ENCODE measurements at regions of chr19 and their contacts with region 1.

Region 1: DNA sequence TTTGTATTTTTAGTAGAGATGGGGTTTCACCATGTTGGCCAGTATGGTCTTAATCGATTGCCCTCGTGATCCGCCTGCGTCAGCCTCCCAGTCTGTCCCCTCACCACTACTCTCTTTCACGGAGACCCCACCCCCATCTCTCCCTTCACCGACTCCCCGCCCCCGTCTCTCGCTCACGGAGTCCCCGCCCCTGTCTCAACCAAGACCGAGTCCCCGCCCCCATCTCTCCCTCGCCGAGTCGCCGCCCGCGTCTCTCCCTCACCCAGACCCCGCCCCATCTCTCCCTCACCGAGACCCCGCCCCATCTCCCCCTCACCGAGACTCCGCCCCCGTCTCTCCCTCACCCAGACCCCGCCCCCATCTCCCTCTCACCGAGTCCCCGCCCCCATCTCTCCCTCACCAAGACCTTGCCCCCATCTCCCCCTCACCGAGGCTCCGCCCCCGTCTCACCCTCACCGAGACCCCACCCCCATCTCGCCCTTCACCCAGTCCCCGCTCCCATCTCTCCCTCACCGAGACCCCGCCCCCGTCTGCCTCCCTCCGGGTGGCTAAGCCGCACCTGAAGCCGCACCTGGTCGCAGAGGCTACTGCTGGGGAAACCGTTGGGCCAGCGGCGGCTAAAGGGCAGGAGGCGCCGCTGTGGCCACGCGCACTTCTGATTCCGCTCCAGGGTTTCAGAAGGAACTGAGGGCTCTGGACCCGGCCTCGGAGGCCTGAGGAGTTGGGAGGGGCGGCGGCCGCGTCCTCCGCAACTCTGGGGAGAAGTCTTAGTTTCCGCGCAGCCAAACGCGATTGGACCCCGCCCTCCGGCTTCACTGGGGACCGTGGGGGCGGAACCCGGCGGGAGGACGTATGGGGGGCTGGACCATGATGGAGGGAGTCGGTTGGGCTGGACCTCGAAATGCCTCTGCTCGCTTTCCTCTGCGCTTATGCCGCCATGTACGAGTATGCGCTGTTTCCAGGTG is 17.1 kb upstream of the ZNF846 start:
- DNase-seq: peak; percentile 90
- H3K4me3 Mint-ChIP-seq: peak overlapping the region; percentile 87
- H3K27ac Mint-ChIP-seq: peak overlapping the region; percentile 89
- H3K4me1 Mint-ChIP-seq: peaks cover 20% of the 10 kb centered on the region
- H3K27me3 Mint-ChIP-seq: no peaks in the 10 kb centered on the region

Region 2: GRCh38 chr19:8832132-8833021 is 953.3 kb before region 1 on chr19 and contains the starts of genes MBD3L1 and ZNF558:
- intact Hi-C with region 1: loop called (anchors 1 kb)
- DNase-seq: peak; percentile 98
- H3K4me3 Mint-ChIP-seq: peak within 1 kb of the TSS; percentile 84
- H3K27ac Mint-ChIP-seq: peak within 1 kb of the TSS; percentile 95
- H3K4me1 Mint-ChIP-seq: peaks cover 20% of the 10 kb centered on the region
- H3K27me3 Mint-ChIP-seq: no peaks in the 10 kb centered on the region
- total RNA-seq, gene MBD3L1: not detected in 2 replicates
- total RNA-seq, gene ZNF558: 18.7 and 23.2 TPM in 2 replicates

Region 3: GRCh38 chr19:9205501-9206113 is 580.0 kb before region 1 on chr19:
- intact Hi-C with region 1: loop called (anchors 1 kb)
- DNase-seq: peak; percentile 52
- H3K4me3 Mint-ChIP-seq: peak overlapping the region; percentile 37
- H3K27ac Mint-ChIP-seq: no peak overlapping the region
- H3K4me1 Mint-ChIP-seq: peaks cover 6% of the 10 kb centered on the region
- H3K27me3 Mint-ChIP-seq: no peaks in the 10 kb centered on the region

Region 4: DNA sequence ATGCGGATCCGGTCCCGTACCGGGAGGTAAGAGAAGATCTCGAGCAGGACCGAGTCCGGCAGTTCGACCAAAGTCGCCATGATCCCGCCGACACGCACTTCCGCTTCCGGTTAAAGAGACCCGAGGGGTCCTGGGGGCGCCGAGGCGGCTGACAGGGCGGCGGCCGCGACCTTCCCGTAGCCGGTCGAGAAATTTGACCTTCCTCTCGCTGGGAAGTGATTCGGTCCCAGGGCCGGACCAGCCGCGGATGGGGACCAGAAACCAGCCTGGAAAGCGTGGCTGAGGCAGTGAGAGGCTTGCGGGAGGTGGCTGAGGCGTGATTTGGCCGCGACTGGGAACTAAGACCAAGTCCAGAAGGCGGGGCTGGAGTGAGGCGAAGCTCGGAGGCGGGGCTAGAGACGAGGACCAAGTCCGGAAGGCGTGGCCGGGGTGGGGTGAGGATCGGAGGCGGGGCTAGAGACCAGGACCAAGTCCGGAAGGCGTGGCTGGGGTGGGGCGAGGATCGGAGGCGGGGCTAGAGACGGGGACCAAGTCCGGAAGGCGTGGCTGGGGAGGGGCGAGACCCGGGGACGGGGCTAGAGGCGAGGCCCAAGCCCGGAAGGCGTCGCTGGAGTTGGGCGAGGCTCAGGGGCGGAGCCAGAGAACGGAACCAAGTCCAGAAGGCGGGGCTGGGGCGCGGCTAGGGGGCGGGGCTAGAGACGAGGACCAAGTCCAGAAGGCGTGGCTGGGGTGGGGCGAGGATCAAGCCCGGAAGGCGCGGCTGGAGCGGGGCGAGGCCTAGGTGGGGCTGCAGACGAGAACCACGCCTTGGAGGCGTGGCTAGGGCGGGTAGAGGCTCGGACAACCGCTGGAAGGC is 33.3 kb after region 1 on chr19 and contains the start of gene FBXL12:
- intact Hi-C with region 1: loop called (anchors 1 kb)
- DNase-seq: peak; percentile 100
- H3K4me3 Mint-ChIP-seq: peak within 1 kb of the TSS; percentile 90
- H3K27ac Mint-ChIP-seq: peak within 1 kb of the TSS; percentile 87
- H3K4me1 Mint-ChIP-seq: peaks cover 27% of the 10 kb centered on the region
- H3K27me3 Mint-ChIP-seq: no peaks in the 10 kb centered on the region
- total RNA-seq, gene FBXL12: 19.4 and 20.7 TPM in 2 replicates

Region 5: GRCh38 chr19:10010247-10010691 is 224.6 kb after region 1 on chr19 and contains the start of gene COL5A3:
- intact Hi-C with region 1: no loop called
- DNase-seq: no peak
- H3K4me3 Mint-ChIP-seq: no peak within 1 kb of the TSS
- H3K27ac Mint-ChIP-seq: peak within 1 kb of the TSS; percentile 1
- H3K4me1 Mint-ChIP-seq: peaks cover 25% of the 10 kb centered on the region
- H3K27me3 Mint-ChIP-seq: peaks cover 44% of the 10 kb centered on the region
- total RNA-seq, gene COL5A3: 0.67 and 0.76 TPM in 2 replicates